OCI-LY7 (cell line): ENCODE measurements at regions of chr15 and their contacts with region 1.

Region 1: GRCh38 chr15:78709263-78709882 is 68.4 kb upstream of the CHRNB4 start:
- DNase-seq: peak; percentile 70
- H3K4me3 ChIP-seq: no peak overlapping the region
- H3K27ac ChIP-seq: no peak overlapping the region
- H3K4me1 ChIP-seq: peaks cover 5% of the 10 kb centered on the region
- CTCF ChIP-seq: peak; percentile 90

Region 2: DNA sequence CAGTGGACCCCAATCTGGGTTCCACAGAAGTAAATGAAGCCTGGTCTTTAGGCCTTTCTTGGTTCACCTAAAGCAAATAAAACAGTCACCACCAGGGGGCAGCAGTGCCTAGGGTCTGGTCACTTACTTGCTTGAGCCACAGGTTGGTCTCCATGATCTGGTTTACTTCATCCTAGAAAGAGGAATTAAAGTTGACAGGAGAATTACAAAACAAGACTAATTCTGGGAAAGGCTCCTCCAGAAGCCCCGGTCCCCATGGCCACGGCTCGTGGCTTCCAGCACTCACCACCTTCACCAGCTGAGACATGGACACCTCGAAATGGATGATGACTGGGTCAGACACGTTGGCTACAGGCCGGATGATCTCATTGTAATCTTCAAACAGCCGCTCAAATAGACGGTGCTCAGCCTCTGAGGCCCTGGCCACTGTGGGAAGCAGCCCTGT is 90.9 kb before region 1 on chr15:
- CTCF ChIA-PET with region 1: no interaction called
- POLR2A ChIA-PET with region 1: no interaction called
- intact Hi-C with region 1: loop called (anchors 1 kb)
- DNase-seq: peak; percentile 83
- H3K4me3 ChIP-seq: no peak overlapping the region
- H3K27ac ChIP-seq: no peak overlapping the region
- H3K4me1 ChIP-seq: no peaks in the 10 kb centered on the region
- CTCF ChIP-seq: peak; percentile 96

Region 3: DNA sequence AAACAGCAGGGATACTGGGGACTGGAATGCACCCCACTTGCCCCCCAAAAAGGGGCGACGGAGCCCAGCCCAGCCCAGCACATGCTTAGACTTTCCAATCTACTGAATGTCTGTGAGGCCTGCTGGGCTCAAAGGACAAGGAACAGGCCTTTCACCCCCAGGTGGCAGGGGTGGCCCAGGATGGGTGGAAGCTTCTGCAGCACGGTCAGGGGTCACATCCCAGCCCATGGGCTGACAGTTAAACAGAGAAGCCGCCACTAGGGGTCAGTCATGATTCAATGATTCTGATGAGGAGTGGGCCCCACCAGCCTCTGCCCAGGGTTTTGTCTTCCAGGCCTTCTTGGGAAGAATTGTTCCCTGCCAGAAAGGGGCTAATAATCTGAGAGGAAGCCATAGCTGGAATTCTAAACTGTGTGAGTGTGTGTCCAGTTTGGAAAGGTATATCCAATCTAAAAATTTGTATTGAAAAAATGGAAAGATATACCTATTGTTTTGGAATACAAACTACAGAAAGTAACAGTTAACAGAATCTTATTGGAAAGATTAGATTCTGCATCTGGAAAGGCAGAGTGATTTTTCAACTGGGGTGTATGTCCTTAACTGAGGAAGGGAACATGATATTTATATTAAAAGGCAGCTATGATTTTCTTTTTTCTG is 70.6 kb before region 1 on chr15:
- CTCF ChIA-PET with region 1: no interaction called
- POLR2A ChIA-PET with region 1: no interaction called
- intact Hi-C with region 1: loop called (anchors 1 kb)
- DNase-seq: peak; percentile 63
- H3K4me3 ChIP-seq: no peak overlapping the region
- H3K27ac ChIP-seq: no peak overlapping the region
- H3K4me1 ChIP-seq: no peaks in the 10 kb centered on the region
- CTCF ChIP-seq: peak; percentile 86

Region 4: GRCh38 chr15:78727600-78727999 is 18.2 kb after region 1 on chr15:
- CTCF ChIA-PET with region 1: no interaction called
- POLR2A ChIA-PET with region 1: no interaction called
- intact Hi-C with region 1: no loop called
- DNase-seq: no peak
- H3K4me3 ChIP-seq: no peak overlapping the region
- H3K27ac ChIP-seq: no peak overlapping the region
- H3K4me1 ChIP-seq: no peaks in the 10 kb centered on the region
- CTCF ChIP-seq: no peak